Activated CD8-positive, alpha-beta T cell treated with anti-CD3 and anti-CD28 coated beads, Interleukin-2, amount 10 ng/mL, durations not matched to agents 7 days and 5 days (primary cell): ENCODE measurements at regions of chr6 and their contacts with region 1.

Region 1: DNA sequence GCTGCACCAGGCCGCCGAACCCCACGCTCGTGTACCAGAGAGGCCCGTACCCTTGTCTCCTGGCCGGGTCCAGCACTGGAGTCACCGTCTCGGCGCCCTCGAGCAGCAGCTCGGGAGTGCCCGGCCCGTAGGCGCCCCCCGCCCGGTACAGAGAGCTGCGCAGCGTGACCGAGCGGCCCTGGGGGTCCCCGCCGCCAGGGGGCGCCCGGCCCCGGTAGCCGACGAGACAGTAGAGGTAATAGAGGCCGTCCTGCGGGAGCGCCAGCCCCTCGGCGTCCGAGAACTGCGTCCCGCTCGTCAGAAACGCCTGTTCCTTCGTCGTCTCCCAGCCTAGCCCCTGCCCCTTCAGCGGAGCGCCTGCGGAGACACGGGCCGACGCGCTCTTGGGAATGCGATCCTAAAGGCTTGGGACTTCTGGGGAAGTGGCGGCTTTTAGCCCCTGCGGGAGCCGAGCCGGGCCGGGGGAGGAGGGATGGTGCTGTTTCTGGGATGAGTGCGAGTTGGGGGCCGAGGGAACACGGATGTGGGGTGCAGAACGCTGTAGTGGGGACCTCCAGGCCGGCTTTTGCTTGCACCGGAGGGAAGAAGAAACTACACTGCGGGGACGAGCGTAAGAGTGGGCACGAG is 1.3 kb downstream of the LTB start:
- DNase-seq: peak; percentile 90
- ATAC-seq: peak; percentile 70
- H3K4me3 Mint-ChIP-seq: peak overlapping the region; percentile 98
- H3K27ac Mint-ChIP-seq: peak overlapping the region; percentile 88
- H3K4me1 Mint-ChIP-seq: peaks cover 72% of the 10 kb centered on the region
- H3K27me3 Mint-ChIP-seq: no peaks in the 10 kb centered on the region

Region 2: GRCh38 chr6:31441365-31442267 is 139.3 kb before region 1 on chr6:
- CTCF ChIA-PET with region 1: no interaction called
- POLR2A ChIA-PET with region 1: no interaction called
- DNase-seq: peak; percentile 88
- ATAC-seq: peak; percentile 98
- H3K4me3 Mint-ChIP-seq: no peak overlapping the region
- H3K27ac Mint-ChIP-seq: no peak overlapping the region
- H3K4me1 Mint-ChIP-seq: peaks cover 6% of the 10 kb centered on the region
- H3K27me3 Mint-ChIP-seq: peaks cover 56% of the 10 kb centered on the region

Region 3: DNA sequence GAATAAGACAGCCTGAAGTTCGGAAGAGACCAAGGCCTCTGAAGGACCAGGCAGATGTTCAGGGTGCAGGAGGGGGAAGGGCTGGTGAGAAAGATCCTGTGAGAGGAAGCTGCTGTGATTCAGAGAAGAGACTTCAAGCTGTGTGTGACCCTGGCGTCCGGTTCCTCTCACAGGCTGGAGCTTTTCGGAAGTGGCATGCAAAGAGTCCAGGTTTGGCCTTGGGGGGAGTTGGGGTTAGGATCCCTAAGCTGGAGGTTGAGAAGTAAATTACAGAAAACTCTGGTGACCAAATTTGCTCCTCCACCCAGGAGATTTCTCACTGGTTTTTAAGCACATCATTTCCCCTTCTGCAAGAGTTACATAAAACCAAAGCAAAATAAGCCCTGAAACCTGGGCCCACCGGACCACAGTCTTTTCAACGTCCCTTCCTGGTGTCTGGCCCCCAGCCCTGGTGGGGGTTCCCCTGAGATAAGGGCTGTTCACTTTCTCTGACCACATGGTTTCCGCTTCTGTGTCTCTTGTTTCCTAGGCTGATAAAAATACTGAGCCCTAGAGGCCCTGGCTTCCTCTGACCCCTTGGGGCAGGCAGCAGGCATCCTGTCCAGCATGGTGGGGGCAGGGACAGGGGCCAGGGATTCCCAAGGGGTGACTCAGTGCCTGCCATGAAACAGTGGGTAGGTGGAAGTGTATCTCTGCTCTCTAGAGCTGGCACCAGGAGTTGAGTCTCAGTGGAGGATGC is 20.8 kb before region 1 on chr6:
- CTCF ChIA-PET with region 1: interaction called, 189 read pairs
- POLR2A ChIA-PET with region 1: interaction called, 55 read pairs
- DNase-seq: peak; percentile 75
- ATAC-seq: peak; percentile 70
- H3K4me3 Mint-ChIP-seq: peak overlapping the region; percentile 65
- H3K27ac Mint-ChIP-seq: peak overlapping the region; percentile 82
- H3K4me1 Mint-ChIP-seq: peaks cover 65% of the 10 kb centered on the region
- H3K27me3 Mint-ChIP-seq: peaks cover 19% of the 10 kb centered on the region

Region 4: DNA sequence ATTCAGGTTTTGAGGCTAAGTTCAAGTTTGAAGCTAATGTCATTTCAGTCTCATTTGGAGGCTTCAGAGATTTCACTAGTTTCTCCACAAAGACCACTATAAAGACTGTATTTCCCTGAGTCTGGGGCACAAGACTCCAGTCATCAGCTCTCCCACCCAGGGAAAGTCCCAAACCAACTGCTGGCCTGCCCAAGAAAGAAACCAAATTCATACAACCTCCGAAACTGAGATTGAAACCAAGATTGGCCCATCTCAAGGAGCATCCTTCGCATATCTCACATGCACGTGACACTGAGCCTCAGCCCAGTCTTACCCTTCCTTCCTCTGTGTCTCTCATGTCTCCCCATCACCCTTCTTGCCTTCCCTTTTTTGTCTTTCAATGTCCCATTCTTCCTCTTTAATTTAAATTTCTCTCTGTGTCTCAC is 12.4 kb before region 1 on chr6:
- CTCF ChIA-PET with region 1: interaction called, 928 read pairs
- POLR2A ChIA-PET with region 1: interaction called, 73 read pairs
- DNase-seq: peak; percentile 86
- ATAC-seq: peak; percentile 74
- H3K4me3 Mint-ChIP-seq: peak overlapping the region; percentile 26
- H3K27ac Mint-ChIP-seq: peak overlapping the region; percentile 56
- H3K4me1 Mint-ChIP-seq: peaks cover 63% of the 10 kb centered on the region
- H3K27me3 Mint-ChIP-seq: peaks cover 22% of the 10 kb centered on the region

Region 5: GRCh38 chr6:31614684-31615578 is 34.0 kb after region 1 on chr6 and contains the start of gene AIF1:
- CTCF ChIA-PET with region 1: interaction called, 10 read pairs
- POLR2A ChIA-PET with region 1: interaction called, 3 read pairs
- DNase-seq: no peak
- ATAC-seq: no peak
- H3K4me3 Mint-ChIP-seq: peak within 1 kb of the TSS; percentile 94
- H3K27ac Mint-ChIP-seq: peak within 1 kb of the TSS; percentile 96
- H3K4me1 Mint-ChIP-seq: peaks cover 45% of the 10 kb centered on the region
- H3K27me3 Mint-ChIP-seq: no peaks in the 10 kb centered on the region
- total RNA-seq, gene AIF1: 177 TPM

Region 6: DNA sequence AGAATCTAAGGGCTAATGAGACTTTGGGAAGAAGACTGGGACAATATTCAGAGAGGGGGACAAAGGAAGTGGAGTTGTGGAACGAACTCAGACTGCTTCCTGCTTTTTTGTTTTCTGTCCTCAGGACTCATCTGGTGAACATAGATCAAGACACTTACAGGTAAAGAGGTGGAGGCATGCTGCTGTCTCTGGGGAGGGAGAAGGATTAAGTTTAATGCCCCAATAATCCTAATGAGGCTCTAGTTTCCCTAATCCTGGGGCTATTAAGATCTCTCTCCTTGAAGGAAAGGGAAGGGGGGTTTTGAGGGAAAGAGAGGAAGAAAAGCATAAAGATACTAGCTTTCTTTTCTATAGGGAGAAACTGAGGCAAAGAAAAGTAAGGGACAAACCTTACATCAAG is 163.5 kb after region 1 on chr6:
- CTCF ChIA-PET with region 1: no interaction called
- POLR2A ChIA-PET with region 1: no interaction called
- DNase-seq: no peak
- ATAC-seq: no peak
- H3K4me3 Mint-ChIP-seq: no peak overlapping the region
- H3K27ac Mint-ChIP-seq: no peak overlapping the region
- H3K4me1 Mint-ChIP-seq: peaks cover 27% of the 10 kb centered on the region
- H3K27me3 Mint-ChIP-seq: no peaks in the 10 kb centered on the region